HepG2 (cell line): ENCODE measurements at regions of chr1 and their contacts with region 1.

Region 1: GRCh38 chr1:109397538-109398342 is at the start of gene SORT1:
- DNase-seq: peak; percentile 90
- ATAC-seq: peak; percentile 93
- H3K4me3 ChIP-seq: peak within 1 kb of the TSS; percentile 73 to 94 (median 75)
- H3K27ac ChIP-seq: peak within 1 kb of the TSS; percentile 61
- H3K4me1 ChIP-seq: peaks cover 49% of the 10 kb centered on the region
- H3K27me3 ChIP-seq: no peaks in the 10 kb centered on the region; a peak in 1 of 5 replicates
- CTCF ChIP-seq: peak; percentile 55
- EP300 ChIP-seq: no peak
- POLR2A ChIP-seq: peak; percentile 27 to 77; a peak in 3 of 4 replicates
- RAD21 ChIP-seq: peak; percentile 78
- total RNA-seq, gene SORT1: 32.4 and 35.3 TPM in 2 replicates

Region 2: DNA sequence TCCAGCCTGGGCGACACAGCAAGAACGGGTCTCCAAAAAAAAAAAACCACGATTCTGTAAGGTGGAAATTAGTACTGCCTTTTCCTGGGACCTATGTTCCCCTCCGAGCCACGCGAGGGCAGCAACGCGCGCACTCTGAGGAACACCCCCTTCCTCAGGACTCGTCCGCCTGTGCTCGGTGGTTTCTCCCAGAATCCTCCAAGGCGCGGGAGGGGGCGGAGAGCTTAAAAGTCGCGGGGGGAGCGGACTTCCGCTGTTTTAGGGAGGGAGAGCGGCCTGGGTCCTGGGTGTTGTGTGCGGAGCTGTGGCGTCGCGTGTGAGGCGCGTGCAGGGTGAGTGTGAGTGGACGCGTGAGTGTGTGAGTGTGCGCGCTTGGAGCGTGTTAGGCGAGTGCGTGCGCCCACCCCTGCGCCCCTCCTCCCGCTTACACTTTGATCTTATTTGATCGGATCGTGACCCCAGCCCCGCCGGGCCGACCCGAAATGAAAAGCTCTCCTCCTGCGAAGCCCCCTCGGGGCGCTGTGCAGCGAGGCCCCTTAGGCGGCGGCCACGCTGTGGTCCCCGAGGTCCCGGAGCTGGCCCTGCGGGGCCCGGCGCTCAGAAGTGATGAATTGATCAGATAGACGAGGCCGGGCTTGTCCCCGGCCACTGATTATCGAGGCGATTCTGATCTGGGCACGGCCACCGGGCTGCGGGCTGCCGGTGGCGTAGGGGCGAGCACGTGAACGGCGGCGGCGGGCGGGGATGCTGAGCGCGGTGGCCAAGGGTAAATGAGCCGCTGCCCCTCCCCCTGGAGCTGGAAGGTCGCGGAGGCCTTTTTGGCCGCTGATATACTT is 297.6 kb before region 1 on chr1:
- CTCF ChIA-PET with region 1: no interaction called
- POLR2A ChIA-PET with region 1: interaction called, 4 read pairs
- in situ Hi-C with region 1: no loop called
- intact Hi-C with region 1: loop called (anchors 10 kb)
- DNase-seq: peak; percentile 94
- ATAC-seq: peak; percentile 91
- H3K4me3 ChIP-seq: peak overlapping the region; percentile 75 to 90 (median 85)
- H3K27ac ChIP-seq: peak overlapping the region; percentile 86
- H3K4me1 ChIP-seq: peaks cover 15% of the 10 kb centered on the region; the same call in 1 of the 2 replicates
- H3K27me3 ChIP-seq: no peaks in the 10 kb centered on the region
- CTCF ChIP-seq: peak; percentile 96
- EP300 ChIP-seq: peak in 1 of 2 experiments; percentile 43; a peak in 2 of 4 replicates
- POLR2A ChIP-seq: peak; percentile 100
- RAD21 ChIP-seq: peak; percentile 14; the same call in 1 of the 2 replicates

Region 3: GRCh38 chr1:109263597-109264398 is 133.9 kb before region 1 on chr1:
- CTCF ChIA-PET with region 1: interaction called, 76 read pairs
- POLR2A ChIA-PET with region 1: interaction called, 6 read pairs
- in situ Hi-C with region 1: loop called (anchors 5 kb)
- intact Hi-C with region 1: loop called (anchors 1 kb)
- DNase-seq: peak; percentile 93
- ATAC-seq: peak; percentile 99
- H3K4me3 ChIP-seq: no peak overlapping the region
- H3K27ac ChIP-seq: no peak overlapping the region
- H3K4me1 ChIP-seq: no peaks in the 10 kb centered on the region
- H3K27me3 ChIP-seq: no peaks in the 10 kb centered on the region
- CTCF ChIP-seq: peak; percentile 99
- EP300 ChIP-seq: no peak
- POLR2A ChIP-seq: no peak
- RAD21 ChIP-seq: peak; percentile 99

Region 4: GRCh38 chr1:109282952-109283747 is 114.6 kb before region 1 on chr1 and contains the start of gene PSRC1:
- CTCF ChIA-PET with region 1: no interaction called
- POLR2A ChIA-PET with region 1: interaction called, 21 read pairs
- in situ Hi-C with region 1: no loop called
- intact Hi-C with region 1: loop called (anchors 2 kb)
- DNase-seq: peak; percentile 90
- ATAC-seq: peak; percentile 95
- H3K4me3 ChIP-seq: peak within 1 kb of the TSS; percentile 75 to 99 (median 93)
- H3K27ac ChIP-seq: peak within 1 kb of the TSS; percentile 85
- H3K4me1 ChIP-seq: peaks cover 52% of the 10 kb centered on the region
- H3K27me3 ChIP-seq: no peaks in the 10 kb centered on the region; a peak in 1 of 5 replicates
- CTCF ChIP-seq: peak; percentile 59
- EP300 ChIP-seq: 0 out of 4 replicates have a peak, but pooled peaks of 1 of the 2 experiments have one; percentile 10
- POLR2A ChIP-seq: peak; percentile 79 to 92
- RAD21 ChIP-seq: peak; percentile 73
- total RNA-seq, gene PSRC1: 26.5 and 28.6 TPM in 2 replicates

Region 5: GRCh38 chr1:109307274-109308021 is 90.3 kb before region 1 on chr1:
- CTCF ChIA-PET with region 1: no interaction called
- POLR2A ChIA-PET with region 1: interaction called, 10 read pairs
- in situ Hi-C with region 1: no loop called
- intact Hi-C with region 1: no loop called
- DNase-seq: peak; percentile 34
- ATAC-seq: peak; percentile 28
- H3K4me3 ChIP-seq: peak overlapping the region in 2 of 3 experiments; percentile 36 to 62; a peak in 3 of 6 replicates
- H3K27ac ChIP-seq: peak overlapping the region; percentile 24
- H3K4me1 ChIP-seq: peaks cover 87% of the 10 kb centered on the region
- H3K27me3 ChIP-seq: no peaks in the 10 kb centered on the region
- CTCF ChIP-seq: no peak
- EP300 ChIP-seq: no peak
- POLR2A ChIP-seq: no peak
- RAD21 ChIP-seq: no peak

Region 6: DNA sequence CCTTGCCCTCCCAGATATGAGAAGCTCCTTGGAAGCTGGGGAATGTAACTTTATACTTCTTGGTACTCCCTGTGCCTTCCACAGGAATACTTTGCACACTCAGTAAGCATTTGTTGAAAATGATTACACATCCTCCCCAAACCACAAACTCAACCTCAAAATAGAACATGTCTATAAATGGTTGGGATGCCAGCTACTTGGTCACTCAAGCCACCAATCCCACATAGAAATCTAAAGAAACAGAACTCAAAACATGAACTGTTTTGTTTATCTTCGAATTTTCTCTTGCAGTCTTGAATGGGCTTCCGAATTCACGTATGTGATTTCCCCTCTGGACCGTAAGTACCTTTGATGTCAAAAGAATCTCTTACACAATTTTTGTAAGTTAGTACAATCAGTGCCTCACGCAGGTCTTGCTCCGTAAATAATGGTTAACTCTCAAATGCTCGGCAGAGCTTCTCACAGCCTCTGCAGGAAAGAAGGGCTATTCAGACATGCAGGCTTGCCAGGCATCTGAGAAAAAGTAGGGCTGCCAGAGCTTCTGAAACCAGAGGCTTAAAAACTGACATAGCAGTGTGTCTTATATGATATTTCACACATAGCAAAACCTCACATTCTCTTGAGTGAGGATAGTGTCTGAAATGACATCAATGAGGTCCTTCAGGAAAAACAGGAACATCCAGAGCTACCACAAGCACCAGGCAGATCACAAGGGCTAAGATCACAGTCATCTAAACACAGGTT is 26.9 kb before region 1 on chr1:
- CTCF ChIA-PET with region 1: no interaction called
- POLR2A ChIA-PET with region 1: interaction called, 6 read pairs
- in situ Hi-C with region 1: no loop called
- intact Hi-C with region 1: loop called (anchors 2 kb)
- DNase-seq: peak; percentile 84
- ATAC-seq: peak; percentile 85
- H3K4me3 ChIP-seq: peak overlapping the region in 1 of 3 experiments; percentile 24; a peak in 1 of 6 replicates
- H3K27ac ChIP-seq: peak overlapping the region; percentile 54
- H3K4me1 ChIP-seq: peaks cover 63% of the 10 kb centered on the region
- H3K27me3 ChIP-seq: no peaks in the 10 kb centered on the region
- CTCF ChIP-seq: no peak
- EP300 ChIP-seq: peak in 1 of 2 experiments; percentile 68; a peak in 2 of 4 replicates
- POLR2A ChIP-seq: no peak
- RAD21 ChIP-seq: no peak

Region 7: DNA sequence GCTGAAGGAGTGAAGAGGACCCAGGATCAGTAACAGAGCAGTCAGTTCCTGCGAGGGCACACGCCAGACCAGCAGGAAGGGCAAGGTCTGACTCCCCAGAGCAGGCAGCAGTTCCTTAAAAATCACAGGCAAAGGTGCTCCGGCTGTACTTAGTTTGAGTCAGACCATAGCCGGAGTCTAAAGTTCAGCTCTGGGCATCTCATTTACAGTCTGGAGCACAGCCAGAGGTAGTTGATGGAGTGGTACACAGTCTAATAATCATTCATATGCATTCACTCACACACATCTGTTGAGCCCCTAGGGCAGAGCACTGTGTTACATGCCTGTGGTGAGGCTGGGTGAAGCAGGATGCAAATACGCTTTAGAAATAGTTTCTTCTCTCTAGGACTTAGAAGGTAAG is 119.1 kb after region 1 on chr1:
- CTCF ChIA-PET with region 1: no interaction called
- POLR2A ChIA-PET with region 1: no interaction called
- in situ Hi-C with region 1: no loop called
- intact Hi-C with region 1: no loop called
- DNase-seq: no peak
- ATAC-seq: peak; percentile 73
- H3K4me3 ChIP-seq: no peak overlapping the region
- H3K27ac ChIP-seq: no peak overlapping the region
- H3K4me1 ChIP-seq: peaks cover 21% of the 10 kb centered on the region
- H3K27me3 ChIP-seq: peaks cover 4 to 24% of the 10 kb centered on the region in 2 experiments; a peak in 3 of 5 replicates
- CTCF ChIP-seq: no peak
- EP300 ChIP-seq: no peak
- POLR2A ChIP-seq: no peak
- RAD21 ChIP-seq: no peak